ENCODE measurements at regions of chr18 and their contacts with region 1.

Region 1: DNA sequence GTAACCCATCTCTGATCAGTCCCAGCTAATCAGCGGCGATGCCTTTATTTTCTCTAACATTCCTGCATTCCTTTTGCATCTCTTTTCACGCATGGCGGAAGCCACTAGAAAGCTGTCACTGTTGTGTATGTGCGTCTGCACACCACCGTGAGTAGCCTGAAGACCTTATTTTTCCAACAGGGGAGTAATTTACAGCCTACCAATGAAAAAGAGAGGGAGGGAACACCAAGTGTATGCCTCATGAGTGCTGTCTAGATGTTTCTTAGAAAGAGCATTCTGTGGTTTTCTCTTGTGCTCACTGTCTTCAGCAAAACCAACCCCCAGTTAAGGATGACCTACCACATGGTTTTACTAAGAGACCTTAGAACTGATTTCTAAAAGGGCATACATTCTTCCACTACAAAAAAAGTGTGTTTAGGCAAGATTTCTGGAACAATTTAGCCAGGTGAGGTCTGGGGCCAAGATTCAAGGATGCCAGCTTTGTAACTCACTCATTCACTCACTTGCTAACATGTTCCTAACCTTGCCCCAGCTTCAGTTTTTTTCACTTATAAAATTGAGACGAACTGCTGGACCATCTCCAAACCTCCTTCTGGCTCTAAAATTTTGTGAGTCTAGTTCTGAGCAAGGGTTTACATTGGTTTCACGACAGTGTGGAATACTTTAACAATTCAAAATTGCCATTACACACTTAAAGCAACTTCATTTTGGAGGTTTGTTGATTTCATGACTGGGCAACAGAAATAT is 51.4 kb downstream of the BCL2 start:
- DNase-seq: no peak
- ATAC-seq: no peak
- H3K4me3 ChIP-seq: no peak overlapping the region
- H3K27ac ChIP-seq: no peak overlapping the region
- H3K4me1 ChIP-seq: peaks cover 37% of the 10 kb centered on the region
- H3K27me3 ChIP-seq: no peaks in the 10 kb centered on the region
- CTCF ChIP-seq: no peak

Region 2: DNA sequence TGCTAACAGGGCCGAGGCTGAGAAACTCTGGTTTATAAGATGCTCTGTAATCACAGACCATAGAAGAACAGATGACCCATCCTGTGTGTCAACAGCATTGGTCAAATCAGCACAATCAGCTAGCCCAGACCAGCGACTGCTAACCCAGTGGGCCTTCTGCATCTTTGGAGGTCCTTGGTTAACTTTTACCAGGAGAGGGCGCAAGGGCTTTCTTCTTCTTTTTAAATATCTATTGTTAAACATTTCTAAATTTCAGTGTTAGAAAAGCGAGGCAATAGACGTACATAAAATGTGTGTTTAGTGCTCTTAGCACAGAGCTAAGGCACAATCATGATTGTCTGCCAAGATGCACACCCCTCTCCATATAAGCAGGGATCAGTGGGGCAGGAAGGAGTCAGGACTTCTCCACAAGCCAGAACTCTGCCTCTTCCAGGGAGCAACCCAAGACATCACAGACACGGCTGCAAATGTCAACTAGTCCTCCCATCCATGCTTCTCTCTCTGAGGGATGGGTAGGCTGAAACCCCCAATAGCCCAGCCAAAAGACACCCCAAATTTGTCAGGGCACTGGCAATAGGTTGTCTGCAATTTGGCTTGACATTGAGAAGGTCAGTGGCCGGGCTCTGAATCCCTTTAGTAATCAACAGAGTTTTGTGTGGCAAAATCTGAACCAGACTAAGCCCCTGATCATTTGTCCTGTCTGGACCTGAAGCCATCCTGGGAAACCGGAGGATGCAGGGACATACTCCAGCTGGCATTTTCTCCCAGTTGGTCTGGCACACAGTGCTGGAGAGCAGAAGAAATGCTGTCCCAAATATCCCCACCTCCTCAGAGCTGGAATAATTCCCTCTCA is 136.8 kb before region 1 on chr18:
- intact Hi-C with region 1: loop called (anchors 5 to 10 kb)
- DNase-seq: no peak
- ATAC-seq: peak; percentile 60 to 75 (median 61)
- H3K4me3 ChIP-seq: peak overlapping the region; percentile 13
- H3K27ac ChIP-seq: peak overlapping the region; percentile 72
- H3K4me1 ChIP-seq: peaks cover 21% of the 10 kb centered on the region
- H3K27me3 ChIP-seq: no peaks in the 10 kb centered on the region
- CTCF ChIP-seq: peak; percentile 73

Region 3: DNA sequence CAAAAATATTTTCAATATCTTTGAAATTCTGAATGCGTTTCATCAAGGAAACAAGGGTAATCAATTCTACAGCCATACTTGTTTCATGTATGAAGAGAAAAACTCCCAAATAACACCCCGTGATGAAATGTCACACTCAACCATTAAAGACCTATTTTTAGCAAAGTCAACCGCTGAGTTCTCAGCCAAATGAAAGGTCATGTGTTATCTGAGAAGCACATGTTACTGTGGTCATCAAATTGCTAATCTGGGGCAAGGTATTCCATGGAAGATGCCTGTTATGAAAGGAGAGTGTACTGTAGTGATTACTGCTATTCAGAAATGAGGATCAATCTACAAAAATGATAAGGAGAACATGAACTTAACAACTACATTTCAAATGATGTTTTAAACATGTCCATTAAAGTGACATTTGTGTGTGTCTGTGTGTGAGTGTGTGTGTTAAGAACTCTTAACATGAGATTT is 75.2 kb before region 1 on chr18:
- intact Hi-C with region 1: loop called in 1 of 2 experiments (anchors 5 kb)
- DNase-seq: no peak
- ATAC-seq: peak; percentile 84 to 96 (median 93)
- H3K4me3 ChIP-seq: no peak overlapping the region
- H3K27ac ChIP-seq: peak overlapping the region; percentile 87
- H3K4me1 ChIP-seq: peaks cover 67% of the 10 kb centered on the region
- H3K27me3 ChIP-seq: no peaks in the 10 kb centered on the region
- CTCF ChIP-seq: no peak